ENCODE measurements at regions of chr1 and their contacts with region 1.

Region 1: DNA sequence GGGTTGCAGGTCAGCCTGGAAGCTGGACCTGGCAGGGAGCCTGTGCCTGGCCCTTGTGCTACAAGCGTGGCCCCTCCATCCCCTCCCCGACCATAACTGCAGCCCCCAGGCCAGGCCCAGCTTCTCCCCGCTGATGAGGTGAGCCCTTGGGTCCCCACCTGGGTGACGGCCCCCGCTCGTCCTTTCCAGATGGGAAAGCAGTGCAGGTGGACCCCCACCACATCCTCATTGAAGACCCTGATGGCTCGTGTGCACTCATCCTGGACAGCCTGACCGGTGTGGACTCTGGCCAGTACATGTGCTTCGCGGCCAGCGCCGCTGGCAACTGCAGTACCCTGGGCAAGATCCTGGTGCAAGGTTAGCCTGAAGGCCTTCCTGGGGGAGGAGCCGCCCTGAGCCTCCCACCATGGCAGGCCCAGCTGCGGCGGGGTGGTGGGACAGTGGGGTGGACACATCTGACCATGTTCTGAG is 56.9 kb downstream of the TRIM11 start:
- DNase-seq: peak in 1 of 2 donors; percentile 42
- ATAC-seq: no peak
- H3K4me3 ChIP-seq: no peak overlapping the region
- H3K27ac ChIP-seq: peak overlapping the region; percentile 5 to 84 (median 43)
- H3K4me1 ChIP-seq: no peaks in the 10 kb centered on the region
- H3K27me3 ChIP-seq: no peaks in the 10 kb centered on the region
- CTCF ChIP-seq: no peak
- POLR2A ChIP-seq: no peak

Region 2: GRCh38 chr1:228212966-228213844 is 136.5 kb before region 1 on chr1:
- in situ Hi-C with region 1: no loop called
- intact Hi-C with region 1: no loop called
- DNase-seq: peak; percentile 76 to 91
- ATAC-seq: peak; percentile 10 to 14
- H3K4me3 ChIP-seq: peak overlapping the region; percentile 39 to 57 (median 52)
- H3K27ac ChIP-seq: peak overlapping the region; percentile 97 to 100 (median 100)
- H3K4me1 ChIP-seq: peaks cover 23 to 63% of the 10 kb centered on the region in 2 donors
- H3K27me3 ChIP-seq: no peaks in the 10 kb centered on the region
- CTCF ChIP-seq: peak in 4 of 5 experiments; percentile 29 to 63 (median 44)
- POLR2A ChIP-seq: peak; percentile 6 to 15

Region 3: DNA sequence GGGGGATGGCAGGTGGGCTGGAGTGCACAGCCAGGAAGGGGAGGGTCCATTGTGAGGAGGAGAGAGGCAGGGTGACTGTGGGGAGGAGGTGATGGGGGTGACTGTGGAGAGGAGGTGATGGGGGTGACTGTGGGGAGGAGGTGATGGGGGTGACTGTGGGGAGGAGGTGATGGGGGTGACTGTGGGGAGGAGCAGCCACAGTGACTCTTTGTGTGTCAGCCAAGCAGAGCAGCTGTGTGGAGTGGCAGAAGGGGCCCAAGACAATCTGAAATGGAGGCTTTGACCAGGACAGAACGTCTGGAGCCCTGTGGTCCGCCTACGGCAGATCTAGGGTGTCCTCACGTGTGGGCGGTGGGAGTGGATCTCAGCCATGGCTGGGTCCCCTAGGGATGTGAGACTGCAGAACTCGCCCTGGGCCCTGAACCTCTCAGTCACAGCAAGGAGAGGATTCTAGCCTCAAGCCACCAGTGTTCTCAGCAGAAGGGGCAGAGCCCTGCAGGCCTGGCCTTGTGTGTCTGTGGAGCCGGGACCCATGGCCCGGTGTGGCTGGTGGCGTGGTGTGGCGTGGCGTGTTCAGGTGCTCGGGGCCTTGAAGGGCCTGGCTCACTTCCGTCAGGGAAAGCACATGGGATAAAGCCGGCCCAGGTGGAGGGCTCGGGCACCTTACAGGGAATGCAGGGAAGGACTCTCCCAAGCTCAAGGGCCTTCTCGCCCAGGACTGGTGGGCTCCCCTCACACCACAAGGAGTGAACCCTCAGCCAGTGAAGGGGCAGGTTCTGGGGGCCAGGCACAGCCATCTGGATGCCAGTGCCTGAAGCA is 60.3 kb before region 1 on chr1:
- in situ Hi-C with region 1: loop called in 1 of 4 experiments (anchors 10 kb)
- intact Hi-C with region 1: loop called (anchors 5 kb)
- DNase-seq: peak in 1 of 2 donors; percentile 9
- ATAC-seq: no peak
- H3K4me3 ChIP-seq: no peak overlapping the region
- H3K27ac ChIP-seq: peak overlapping the region in 1 of 4 donors; percentile 39
- H3K4me1 ChIP-seq: no peaks in the 10 kb centered on the region
- H3K27me3 ChIP-seq: no peaks in the 10 kb centered on the region
- CTCF ChIP-seq: no peak
- POLR2A ChIP-seq: no peak

Measured in gastrocnemius medialis (tissue), 4 donors.